ENCODE measurements at regions of chr15 and their contacts with region 1.

Region 1: GRCh38 chr15:96330450-96331145 is at the start of gene NR2F2:
- DNase-seq: peak; percentile 85 to 88
- H3K4me3 ChIP-seq: peak within 1 kb of the TSS; percentile 42 to 64 (median 48)
- H3K27ac ChIP-seq: no peak within 1 kb of the TSS
- H3K4me1 ChIP-seq: peaks cover 14 to 38% (median 26%) of the 10 kb centered on the region in 4 experiments
- H3K27me3 ChIP-seq: peaks cover 75 to 94% (median 87%) of the 10 kb centered on the region in 4 experiments
- CTCF ChIP-seq: no peak
- EP300 ChIP-seq: no peak
- POLR2A ChIP-seq: no peak
- RAD21 ChIP-seq: no peak
- total RNA-seq, gene NR2F2: not detected in 2 replicates

Region 2: DNA sequence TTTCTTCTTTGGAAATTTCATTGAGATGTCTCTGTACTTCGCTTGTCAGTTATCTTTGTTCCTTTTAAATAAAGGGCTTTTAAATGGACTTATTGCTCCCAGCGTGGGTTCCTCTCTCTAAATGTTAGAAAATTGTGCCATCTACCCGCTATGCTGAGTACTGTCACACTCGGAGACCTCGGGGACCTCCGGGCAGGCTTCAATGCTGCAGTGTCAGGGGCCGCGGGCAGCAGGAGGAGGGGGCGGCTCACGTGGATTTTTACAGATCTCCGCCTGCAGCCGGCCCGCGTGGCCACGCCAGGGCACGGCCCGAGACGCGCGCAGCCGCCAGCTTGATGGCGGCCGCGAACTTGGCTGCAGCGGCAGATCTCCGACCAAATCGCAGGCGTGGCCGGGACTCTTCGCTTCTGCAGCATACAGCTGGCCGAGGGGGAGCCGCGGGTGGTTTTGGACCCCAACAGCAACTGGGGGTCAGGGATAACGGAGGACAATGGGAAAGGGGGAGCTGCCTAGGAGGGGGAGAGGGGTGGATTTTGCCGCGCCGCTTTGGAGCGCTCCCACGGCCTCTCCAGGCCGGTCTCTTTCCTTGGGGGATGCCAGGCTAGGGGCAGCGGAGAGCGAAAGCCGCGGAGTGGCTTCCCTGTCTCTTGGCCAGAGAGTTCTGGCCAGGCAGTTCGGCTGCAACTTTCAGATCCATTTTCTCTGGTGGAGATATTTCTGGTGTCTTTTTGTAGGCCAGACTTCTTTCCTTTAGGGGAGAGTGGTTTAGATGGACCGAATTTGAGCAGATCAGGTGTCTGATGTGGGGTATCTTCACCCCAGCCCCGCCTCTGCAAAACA is 15.2 kb after region 1 on chr15:
- CTCF ChIA-PET with region 1: interaction called, 59 read pairs
- POLR2A ChIA-PET with region 1: interaction called, 6 read pairs
- DNase-seq: peak in 1 of 2 experiments; percentile 73
- H3K4me3 ChIP-seq: peak overlapping the region in 3 of 4 experiments; percentile 29 to 52 (median 40); a peak in 7 of 8 replicates
- H3K27ac ChIP-seq: no peak overlapping the region
- H3K4me1 ChIP-seq: peaks cover 20 to 37% (median 25%) of the 10 kb centered on the region in 4 experiments; a peak in 6 of 7 replicates
- H3K27me3 ChIP-seq: peaks cover 89 to 97% (median 93%) of the 10 kb centered on the region in 4 experiments
- CTCF ChIP-seq: peak; percentile 46 to 54 (median 54)
- EP300 ChIP-seq: no peak
- POLR2A ChIP-seq: no peak
- RAD21 ChIP-seq: peak; percentile 74 to 80

Region 3: DNA sequence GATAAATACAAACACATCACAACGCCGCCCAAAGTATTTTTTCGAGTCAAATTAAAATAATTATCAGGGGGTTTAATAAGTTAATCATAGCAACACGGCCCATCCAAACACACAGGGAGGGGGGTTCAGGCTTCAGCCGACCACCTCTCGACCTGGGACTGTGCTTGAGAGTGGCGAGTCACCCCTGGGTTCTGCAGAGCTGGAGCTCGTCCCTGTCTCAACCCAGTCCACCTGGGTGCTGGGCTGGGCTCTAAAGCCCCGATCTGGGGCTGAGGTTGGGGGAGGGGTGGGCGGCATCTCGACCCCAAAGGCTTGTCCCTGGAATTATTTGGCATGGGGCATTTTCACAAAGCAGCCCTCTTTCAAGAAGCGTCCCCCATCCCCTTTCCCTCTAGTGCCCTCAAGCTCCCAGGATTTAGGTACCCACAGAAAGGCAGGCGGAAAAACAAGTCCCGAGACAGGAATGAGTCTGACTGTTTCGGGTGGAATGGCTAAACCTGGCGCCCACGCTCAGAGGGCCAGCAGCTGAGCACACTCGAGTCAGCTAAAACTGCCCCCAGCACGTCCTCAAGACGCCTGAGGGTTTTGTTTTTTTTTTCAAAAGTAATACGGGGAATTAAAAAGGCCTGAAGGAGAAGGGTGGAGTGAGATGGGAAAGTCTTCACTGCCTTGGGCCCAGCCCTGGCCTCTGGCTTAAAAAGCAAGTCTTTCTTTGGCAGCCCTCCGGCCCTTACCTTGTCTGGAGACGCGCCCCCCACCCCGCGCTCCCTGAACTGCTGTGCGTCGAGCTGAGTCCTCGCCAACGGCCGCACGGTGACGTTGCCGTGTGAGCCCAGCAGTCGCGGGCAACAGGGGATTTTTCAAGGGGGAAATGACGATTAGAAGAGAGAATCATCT is 32.4 kb after region 1 on chr15:
- CTCF ChIA-PET with region 1: interaction called, 13 read pairs
- POLR2A ChIA-PET with region 1: no interaction called
- DNase-seq: peak in 1 of 2 experiments; percentile 71
- H3K4me3 ChIP-seq: peak overlapping the region in 1 of 4 experiments; percentile 45; a peak in 2 of 8 replicates
- H3K27ac ChIP-seq: no peak overlapping the region
- H3K4me1 ChIP-seq: peaks cover 0 to 34% (median 19%) of the 10 kb centered on the region in 4 experiments; a peak in 5 of 7 replicates
- H3K27me3 ChIP-seq: peaks cover 97 to 100% (median 99%) of the 10 kb centered on the region in 4 experiments
- CTCF ChIP-seq: no peak
- EP300 ChIP-seq: no peak
- POLR2A ChIP-seq: no peak
- RAD21 ChIP-seq: peak in 1 of 2 experiments; percentile 21; a peak in 1 of 4 replicates

Region 4: DNA sequence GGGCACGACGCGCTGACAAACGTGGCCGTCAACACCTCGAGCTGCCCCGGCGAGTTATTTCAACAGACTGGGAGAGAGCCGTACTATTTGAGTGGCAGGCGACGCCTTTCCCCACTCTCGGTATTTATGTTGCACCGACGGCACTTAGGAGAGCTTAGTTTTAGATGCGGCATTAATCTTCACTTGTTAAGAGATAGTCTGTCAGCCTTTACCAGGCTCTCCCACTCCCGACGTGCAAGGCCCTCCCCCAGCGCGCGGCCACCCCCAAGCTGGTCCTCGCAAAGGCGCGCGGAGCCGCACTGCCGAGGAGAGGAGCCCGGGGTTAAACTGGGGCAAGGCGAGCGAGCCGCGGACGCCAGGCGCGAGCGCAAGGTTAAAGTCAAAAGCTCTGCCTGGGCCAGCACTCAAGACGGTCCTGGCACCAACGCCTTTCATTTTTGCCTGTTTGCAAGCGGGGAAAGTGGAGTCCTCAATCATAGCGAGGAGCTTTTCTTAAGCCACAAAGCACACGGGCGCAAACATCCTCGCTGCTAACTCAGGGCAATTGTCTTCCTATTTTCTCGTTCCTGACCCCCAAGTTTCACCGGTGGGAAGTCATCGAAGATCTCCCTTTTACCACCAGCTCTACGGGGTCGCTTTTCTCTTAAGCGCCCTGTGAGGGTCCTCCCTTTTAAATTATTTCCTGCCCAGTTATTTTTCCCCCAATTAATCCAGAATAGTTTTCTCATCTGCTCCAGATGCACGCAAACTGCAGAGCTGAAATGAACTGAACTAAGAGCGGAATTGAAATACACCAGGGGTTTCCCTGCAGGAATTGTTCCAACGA is 86.5 kb after region 1 on chr15:
- CTCF ChIA-PET with region 1: interaction called, 10 read pairs
- POLR2A ChIA-PET with region 1: no interaction called
- DNase-seq: peak in 1 of 2 experiments; percentile 63
- H3K4me3 ChIP-seq: peak overlapping the region in 3 of 4 experiments; percentile 7 to 47 (median 13); a peak in 5 of 8 replicates
- H3K27ac ChIP-seq: no peak overlapping the region
- H3K4me1 ChIP-seq: peaks cover 4 to 15% (median 7%) of the 10 kb centered on the region in 4 experiments
- H3K27me3 ChIP-seq: peaks cover 70 to 94% (median 86%) of the 10 kb centered on the region in 4 experiments
- CTCF ChIP-seq: no peak
- EP300 ChIP-seq: no peak
- POLR2A ChIP-seq: no peak
- RAD21 ChIP-seq: peak in 1 of 2 experiments; percentile 6; a peak in 1 of 4 replicates